Left ventricle myocardium inferior (tissue), 1 donor: ENCODE measurements at regions of chr18 and their contacts with region 1.

Region 1: DNA sequence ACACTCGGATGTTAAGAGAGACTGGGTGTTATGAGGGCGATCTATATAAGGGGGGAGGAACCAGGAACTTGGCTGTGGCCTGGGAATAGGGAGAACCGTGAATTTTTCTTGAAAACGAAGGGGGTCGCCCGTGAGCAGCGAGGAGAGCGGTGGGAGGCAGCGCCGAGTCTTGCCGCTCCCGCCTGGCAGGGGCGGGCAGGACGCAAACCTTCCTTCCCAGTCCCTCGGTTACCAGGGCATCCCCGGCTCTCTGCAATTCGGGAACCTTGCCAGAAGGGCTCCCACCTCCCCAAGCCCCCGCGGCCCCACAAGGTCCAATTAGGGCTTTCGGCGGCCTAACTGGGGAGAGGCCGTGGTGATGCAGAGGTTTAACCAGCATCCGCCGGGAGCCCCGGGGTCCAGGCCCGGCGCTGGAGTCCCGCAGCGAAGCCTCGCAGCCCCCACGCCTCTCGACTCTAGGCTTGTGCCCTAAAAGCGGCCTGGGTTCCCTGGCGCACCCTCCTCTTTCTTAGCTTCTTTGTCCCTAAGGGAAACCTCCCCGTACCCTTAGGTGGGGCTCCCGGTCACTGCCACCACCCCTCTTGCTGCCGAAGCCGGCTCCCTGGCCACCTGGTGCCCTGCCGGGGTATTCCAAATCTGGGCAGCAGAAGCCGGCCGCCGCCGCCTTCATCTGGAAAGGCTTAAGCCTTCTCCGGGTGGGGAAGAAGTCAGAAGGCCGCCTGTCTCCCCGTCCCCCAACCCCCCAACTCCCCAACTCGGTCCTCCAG is 680 bp upstream of the FHOD3 start:
- DNase-seq: peak; percentile 60
- H3K4me3 ChIP-seq: peak overlapping the region; percentile 89
- H3K27ac ChIP-seq: peak overlapping the region; percentile 88
- H3K4me1 ChIP-seq: peaks cover 47% of the 10 kb centered on the region
- H3K27me3 ChIP-seq: peaks cover 44% of the 10 kb centered on the region
- CTCF ChIP-seq: no peak

Region 2: DNA sequence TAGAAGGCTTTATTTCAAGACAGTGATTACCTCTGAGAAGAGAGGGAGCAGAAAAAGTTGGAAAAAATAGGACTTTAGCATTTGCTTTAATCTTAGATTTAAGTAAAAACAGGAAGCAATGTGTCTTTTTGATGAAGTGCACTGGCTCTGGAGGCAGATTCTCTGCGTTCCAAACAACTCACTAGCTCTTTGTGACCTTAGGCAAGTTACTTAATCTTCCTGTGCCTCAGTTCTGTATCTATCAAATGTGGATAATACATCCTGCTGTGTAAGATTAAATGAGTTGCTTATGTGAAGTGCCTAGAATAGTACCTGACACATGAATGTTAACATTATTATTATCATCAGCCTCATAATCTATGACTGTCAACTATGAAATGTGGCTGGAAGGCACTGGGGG is 271.8 kb before region 1 on chr18:
- intact Hi-C with region 1: no loop called
- DNase-seq: no peak
- H3K4me3 ChIP-seq: no peak overlapping the region
- H3K27ac ChIP-seq: no peak overlapping the region
- H3K4me1 ChIP-seq: peaks cover 6% of the 10 kb centered on the region
- H3K27me3 ChIP-seq: no peaks in the 10 kb centered on the region
- CTCF ChIP-seq: no peak

Region 3: DNA sequence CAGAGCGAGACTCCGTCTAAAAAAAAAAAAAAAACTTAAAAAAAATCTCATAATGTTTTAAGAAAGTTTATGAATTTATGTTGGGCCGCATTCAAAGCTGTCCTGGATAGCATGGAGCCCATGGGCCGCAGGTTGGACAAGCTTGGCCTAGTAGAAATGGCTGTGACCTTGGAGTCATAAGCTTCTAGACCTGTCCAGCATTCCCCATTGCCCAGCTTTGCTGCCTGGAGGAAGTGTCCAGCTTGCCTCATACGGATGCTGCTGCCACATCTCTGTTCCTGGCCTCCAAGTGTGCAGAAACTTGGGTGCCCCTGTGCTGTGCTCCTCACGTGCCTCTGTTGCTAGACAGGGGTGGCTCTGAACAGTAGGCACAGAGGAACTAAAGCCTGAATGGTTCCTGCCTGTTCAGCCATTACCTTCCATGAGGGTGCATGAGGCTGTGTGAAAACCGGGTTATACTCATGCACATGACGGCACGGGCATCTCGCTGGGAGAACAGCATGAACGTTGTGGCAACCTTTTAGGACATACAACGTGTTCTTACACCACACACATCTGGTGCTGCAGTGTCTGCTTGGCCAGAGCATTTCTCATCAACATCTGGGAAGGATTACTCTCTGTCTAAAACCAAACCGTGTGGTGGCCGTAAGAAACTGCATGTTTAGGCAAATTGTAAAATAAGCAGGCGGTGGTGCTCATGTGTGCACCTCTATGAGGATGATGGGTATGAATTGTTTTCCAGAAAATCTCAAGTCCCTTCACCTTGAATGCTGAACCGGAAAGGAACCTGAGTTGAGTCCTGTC is 38.8 kb after region 1 on chr18:
- intact Hi-C with region 1: no loop called
- DNase-seq: no peak
- H3K4me3 ChIP-seq: no peak overlapping the region
- H3K27ac ChIP-seq: no peak overlapping the region
- H3K4me1 ChIP-seq: peaks cover 76% of the 10 kb centered on the region
- H3K27me3 ChIP-seq: no peaks in the 10 kb centered on the region
- CTCF ChIP-seq: no peak

Region 4: GRCh38 chr18:36572135-36572856 is 275.5 kb after region 1 on chr18:
- intact Hi-C with region 1: loop called (anchors 5 kb)
- DNase-seq: no peak
- H3K4me3 ChIP-seq: no peak overlapping the region
- H3K27ac ChIP-seq: peak overlapping the region; percentile 29
- H3K4me1 ChIP-seq: peaks cover 28% of the 10 kb centered on the region
- H3K27me3 ChIP-seq: no peaks in the 10 kb centered on the region
- CTCF ChIP-seq: peak; percentile 59

Region 5: GRCh38 chr18:36661999-36662398 is 365.2 kb after region 1 on chr18:
- intact Hi-C with region 1: no loop called
- DNase-seq: no peak
- H3K4me3 ChIP-seq: no peak overlapping the region
- H3K27ac ChIP-seq: no peak overlapping the region
- H3K4me1 ChIP-seq: peaks cover 21% of the 10 kb centered on the region
- H3K27me3 ChIP-seq: no peaks in the 10 kb centered on the region
- CTCF ChIP-seq: no peak